Sigmoid colon (tissue), 7 donors: ENCODE measurements at regions of chr13 and their contacts with region 1.

Region 1: DNA sequence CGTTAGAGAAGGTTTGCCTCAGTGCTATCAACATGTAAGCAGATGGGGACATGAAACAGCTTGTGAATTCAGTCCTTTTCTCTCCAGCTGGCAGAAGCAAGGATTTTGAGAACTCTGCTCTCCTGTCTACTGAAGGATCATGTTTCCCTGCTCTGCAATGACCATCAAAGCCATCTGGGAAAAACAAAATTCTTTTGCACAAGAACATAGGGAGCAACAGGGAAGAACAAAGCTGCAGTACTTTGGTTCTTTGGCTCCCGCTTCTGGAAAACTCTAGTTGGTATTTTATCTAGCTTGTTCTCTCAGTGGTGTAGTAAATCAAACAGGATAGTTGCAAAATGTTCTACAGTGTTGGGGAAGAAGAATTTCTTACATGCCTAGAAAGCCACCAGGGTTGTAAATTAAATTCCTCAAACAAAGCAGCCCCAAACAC is 270.4 kb downstream of the ENOX1 start:
- DNase-seq: peak; percentile 77
- H3K4me3 ChIP-seq: no peak overlapping the region
- H3K27ac ChIP-seq: peak overlapping the region; percentile 68 to 86 (median 77)
- H3K4me1 ChIP-seq: peaks cover 0 to 58% (median 46%) of the 10 kb centered on the region in 4 donors
- H3K27me3 ChIP-seq: no peaks in the 10 kb centered on the region
- CTCF ChIP-seq: no peak
- EP300 ChIP-seq: peak; percentile 13 to 84 (median 44)
- POLR2A ChIP-seq: no peak

Region 2: DNA sequence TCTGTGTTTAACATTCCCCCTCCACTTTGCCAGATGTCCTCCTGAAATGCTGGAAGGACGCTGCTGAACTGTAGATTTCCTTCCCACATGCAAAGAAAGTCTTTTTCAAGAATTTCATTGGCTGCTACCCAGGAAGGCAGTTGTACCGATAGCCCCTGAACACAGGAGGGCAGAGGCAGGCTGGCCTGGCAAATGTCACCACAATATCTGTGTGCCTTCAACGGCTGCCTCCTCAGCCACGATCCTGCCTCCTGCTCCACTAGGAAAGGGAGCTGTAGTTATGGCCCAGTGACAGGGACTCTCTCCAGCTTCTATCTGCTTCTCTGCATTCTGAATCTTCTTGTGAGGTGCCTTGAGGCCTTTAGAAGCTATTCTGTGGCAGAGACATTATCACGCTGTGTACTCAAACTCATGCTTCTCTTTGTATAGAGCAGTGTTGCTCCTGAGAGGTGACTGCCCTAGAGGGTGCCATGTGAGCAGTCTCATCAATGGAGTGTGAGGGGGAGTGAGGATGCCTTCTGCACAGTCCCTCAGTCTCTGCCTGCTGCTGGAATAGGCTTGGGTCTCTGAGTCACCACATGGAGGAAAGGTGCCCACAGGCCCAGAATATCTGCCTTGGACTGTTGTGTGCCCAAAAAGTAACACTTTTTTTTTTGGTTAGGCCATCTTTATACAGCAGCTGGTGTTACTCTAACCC is 213.2 kb before region 1 on chr13:
- intact Hi-C with region 1: loop called (anchors 10 kb)
- DNase-seq: peak; percentile 80
- H3K4me3 ChIP-seq: no peak overlapping the region
- H3K27ac ChIP-seq: peak overlapping the region; percentile 33 to 75 (median 71)
- H3K4me1 ChIP-seq: peaks cover 0 to 99% (median 76%) of the 10 kb centered on the region in 4 donors
- H3K27me3 ChIP-seq: no peaks in the 10 kb centered on the region
- CTCF ChIP-seq: peak; percentile 33 to 50 (median 42)
- EP300 ChIP-seq: no peak
- POLR2A ChIP-seq: no peak

Region 3: DNA sequence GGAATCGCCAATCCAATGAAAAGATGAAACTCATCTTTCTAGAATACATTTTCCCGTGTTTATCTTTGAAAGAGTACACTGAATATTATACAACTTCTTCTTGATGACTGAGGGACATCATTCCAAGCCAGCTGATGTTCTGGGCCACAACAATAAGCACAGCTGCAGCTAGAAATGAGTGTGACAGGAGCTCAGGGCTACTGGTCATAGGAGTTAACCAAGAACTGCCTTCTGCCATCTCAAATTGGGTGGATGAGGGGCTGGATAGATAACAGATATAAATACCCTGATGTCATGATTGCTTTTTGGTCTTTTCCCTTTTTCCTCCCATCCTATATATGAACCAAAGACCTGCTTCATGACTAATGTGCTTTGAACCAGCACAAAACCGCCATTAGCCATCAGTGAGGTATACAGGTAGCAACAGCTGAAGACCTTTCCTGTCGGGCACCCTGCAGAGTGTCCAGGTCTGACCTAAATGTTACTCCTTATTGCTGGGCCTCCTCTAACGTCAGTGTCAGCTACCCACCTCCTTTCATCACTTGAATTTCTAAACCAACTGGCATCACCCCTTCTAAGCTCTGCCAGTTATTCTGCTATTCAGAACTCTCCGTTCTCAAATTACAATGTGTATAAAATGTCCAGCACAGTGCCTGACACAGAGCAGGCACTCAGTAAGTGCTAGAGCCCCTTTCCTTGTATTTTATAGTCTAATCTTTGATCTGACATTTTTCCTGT is 92.2 kb after region 1 on chr13:
- intact Hi-C with region 1: no loop called
- DNase-seq: no peak
- H3K4me3 ChIP-seq: no peak overlapping the region
- H3K27ac ChIP-seq: peak overlapping the region in 3 of 4 donors; percentile 51 to 72 (median 54)
- H3K4me1 ChIP-seq: peaks cover 0 to 47% (median 23%) of the 10 kb centered on the region in 4 donors
- H3K27me3 ChIP-seq: no peaks in the 10 kb centered on the region
- CTCF ChIP-seq: no peak
- EP300 ChIP-seq: peak in 2 of 4 donors; percentile 3 to 58
- POLR2A ChIP-seq: no peak

Region 4: GRCh38 chr13:43698758-43699157 is 182.3 kb after region 1 on chr13:
- intact Hi-C with region 1: loop called (anchors 5 kb)
- DNase-seq: no peak
- H3K4me3 ChIP-seq: no peak overlapping the region
- H3K27ac ChIP-seq: peak overlapping the region; percentile 28 to 73 (median 44)
- H3K4me1 ChIP-seq: peaks cover 0 to 57% (median 31%) of the 10 kb centered on the region in 4 donors
- H3K27me3 ChIP-seq: no peaks in the 10 kb centered on the region
- CTCF ChIP-seq: no peak
- EP300 ChIP-seq: peak in 1 of 4 donors; percentile 30
- POLR2A ChIP-seq: no peak

Region 5: DNA sequence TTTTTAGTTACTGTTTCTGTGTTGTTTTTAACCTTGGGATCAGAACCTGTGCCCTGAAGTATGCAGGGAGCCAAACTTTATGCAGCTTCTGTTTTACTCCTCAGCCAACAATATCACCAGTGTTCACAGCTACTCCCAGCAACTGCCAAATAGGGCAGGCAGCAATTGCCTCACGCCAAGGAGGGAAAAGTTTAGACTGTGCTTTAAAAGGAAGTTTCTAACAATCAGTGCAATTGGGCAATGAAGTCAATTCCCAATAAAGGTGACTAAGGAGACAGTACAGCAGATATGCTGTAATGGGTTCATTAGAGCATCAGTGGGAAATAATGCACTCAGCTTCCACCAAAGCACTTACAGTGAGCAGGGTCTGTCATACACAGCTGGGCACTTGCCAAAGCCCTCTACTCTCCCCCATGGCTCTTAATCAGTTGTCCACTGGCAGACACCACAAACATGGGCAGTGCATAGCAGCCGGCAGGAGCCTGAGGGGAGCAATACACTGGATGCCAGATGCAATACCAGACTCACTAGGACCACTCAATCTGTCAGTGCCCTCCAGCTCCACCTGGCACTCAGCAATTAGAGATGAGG is 251.0 kb after region 1 on chr13:
- intact Hi-C with region 1: loop called (anchors 5 kb)
- DNase-seq: peak; percentile 78
- H3K4me3 ChIP-seq: peak overlapping the region in 1 of 4 donors; percentile 3
- H3K27ac ChIP-seq: peak overlapping the region; percentile 68 to 82 (median 72)
- H3K4me1 ChIP-seq: peaks cover 0 to 77% (median 59%) of the 10 kb centered on the region in 4 donors
- H3K27me3 ChIP-seq: no peaks in the 10 kb centered on the region
- CTCF ChIP-seq: no peak
- EP300 ChIP-seq: no peak
- POLR2A ChIP-seq: no peak

Region 6: GRCh38 chr13:44075113-44075512 is 558.7 kb after region 1 on chr13:
- intact Hi-C with region 1: no loop called
- DNase-seq: no peak
- H3K4me3 ChIP-seq: no peak overlapping the region
- H3K27ac ChIP-seq: no peak overlapping the region
- H3K4me1 ChIP-seq: peaks cover 0 to 10% (median 0%) of the 10 kb centered on the region in 4 donors
- H3K27me3 ChIP-seq: no peaks in the 10 kb centered on the region
- CTCF ChIP-seq: no peak
- EP300 ChIP-seq: no peak
- POLR2A ChIP-seq: no peak